AG04449 (cell line): ENCODE measurements at regions of chr12 and their contacts with region 1.

Region 1: DNA sequence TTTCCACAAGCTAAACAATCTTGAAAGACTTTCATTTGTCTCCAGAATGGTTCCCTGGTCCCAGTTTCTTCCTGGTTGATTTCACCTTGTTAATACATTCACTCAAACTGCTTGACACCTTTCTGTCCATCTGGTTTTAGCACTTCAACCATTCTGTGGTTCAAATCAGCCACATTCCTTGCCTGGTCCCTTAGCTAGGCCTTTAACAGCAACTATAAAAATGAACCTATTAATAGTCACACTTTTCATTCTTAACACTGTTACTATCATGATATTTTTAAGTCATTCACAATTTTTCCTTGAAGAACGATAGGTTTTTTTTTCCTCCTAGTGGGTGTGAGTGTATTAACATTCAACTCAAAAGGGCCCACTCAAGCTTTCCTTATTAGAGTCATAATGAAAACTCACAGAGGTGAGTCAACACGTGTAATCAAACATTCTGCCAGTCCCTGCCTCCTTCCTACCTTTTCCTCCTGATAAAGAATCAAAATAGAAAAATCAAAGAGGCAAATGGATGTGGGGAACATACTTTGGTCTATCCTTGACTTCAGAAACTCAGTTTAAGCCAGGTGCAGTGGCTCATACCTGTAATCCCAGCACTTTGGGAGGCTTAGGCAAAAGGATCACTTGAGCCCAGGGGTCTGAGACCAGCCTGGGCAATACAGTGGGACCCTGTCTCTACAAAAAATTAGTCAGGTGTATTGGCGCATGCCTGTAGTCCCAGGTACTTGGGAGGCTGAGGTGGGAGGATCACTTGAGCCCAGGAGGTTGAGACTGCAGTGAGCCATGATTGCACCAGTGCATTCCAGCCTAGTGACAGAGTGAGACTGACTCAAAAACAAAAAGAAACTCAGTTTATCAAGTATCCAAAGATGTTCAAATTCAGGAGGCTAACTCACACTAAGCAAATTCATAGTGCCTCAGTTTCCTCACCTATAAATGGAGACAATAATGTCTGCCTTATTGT is 34.5 kb upstream of the CCNT1 start:
- DNase-seq: no peak
- H3K4me3 ChIP-seq: no peak overlapping the region
- CTCF ChIP-seq: no peak

Region 2: GRCh38 chr12:48774516-48774915 is 23.5 kb after region 1 on chr12:
- CTCF ChIA-PET with region 1: interaction called, 33 read pairs
- POLR2A ChIA-PET with region 1: no interaction called
- DNase-seq: no peak
- H3K4me3 ChIP-seq: no peak overlapping the region
- CTCF ChIP-seq: no peak

Region 3: DNA sequence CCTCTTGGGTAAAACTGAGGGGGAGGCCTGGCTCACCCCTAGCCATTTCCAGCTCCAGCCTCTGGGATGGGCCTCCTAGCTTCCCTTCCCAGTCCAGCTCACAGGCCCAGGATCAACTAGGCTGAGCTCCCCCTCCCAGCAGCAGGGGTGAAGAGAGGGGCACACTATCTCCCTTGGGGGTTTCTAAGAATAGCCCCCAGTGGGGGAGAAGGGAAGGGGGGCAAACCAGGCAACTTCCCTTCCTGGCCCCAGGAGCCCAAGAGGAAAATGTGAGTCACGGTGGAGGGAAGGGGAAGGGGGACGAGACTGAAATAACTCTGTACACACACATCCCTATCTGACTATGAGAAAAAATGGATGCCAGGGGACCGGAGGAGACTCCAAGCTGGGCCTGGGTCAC is 28.8 kb after region 1 on chr12:
- CTCF ChIA-PET with region 1: interaction called, 33 read pairs
- POLR2A ChIA-PET with region 1: no interaction called
- DNase-seq: peak; percentile 45
- H3K4me3 ChIP-seq: no peak overlapping the region; the same call in 1 of the 2 replicates
- CTCF ChIP-seq: no peak

Region 4: DNA sequence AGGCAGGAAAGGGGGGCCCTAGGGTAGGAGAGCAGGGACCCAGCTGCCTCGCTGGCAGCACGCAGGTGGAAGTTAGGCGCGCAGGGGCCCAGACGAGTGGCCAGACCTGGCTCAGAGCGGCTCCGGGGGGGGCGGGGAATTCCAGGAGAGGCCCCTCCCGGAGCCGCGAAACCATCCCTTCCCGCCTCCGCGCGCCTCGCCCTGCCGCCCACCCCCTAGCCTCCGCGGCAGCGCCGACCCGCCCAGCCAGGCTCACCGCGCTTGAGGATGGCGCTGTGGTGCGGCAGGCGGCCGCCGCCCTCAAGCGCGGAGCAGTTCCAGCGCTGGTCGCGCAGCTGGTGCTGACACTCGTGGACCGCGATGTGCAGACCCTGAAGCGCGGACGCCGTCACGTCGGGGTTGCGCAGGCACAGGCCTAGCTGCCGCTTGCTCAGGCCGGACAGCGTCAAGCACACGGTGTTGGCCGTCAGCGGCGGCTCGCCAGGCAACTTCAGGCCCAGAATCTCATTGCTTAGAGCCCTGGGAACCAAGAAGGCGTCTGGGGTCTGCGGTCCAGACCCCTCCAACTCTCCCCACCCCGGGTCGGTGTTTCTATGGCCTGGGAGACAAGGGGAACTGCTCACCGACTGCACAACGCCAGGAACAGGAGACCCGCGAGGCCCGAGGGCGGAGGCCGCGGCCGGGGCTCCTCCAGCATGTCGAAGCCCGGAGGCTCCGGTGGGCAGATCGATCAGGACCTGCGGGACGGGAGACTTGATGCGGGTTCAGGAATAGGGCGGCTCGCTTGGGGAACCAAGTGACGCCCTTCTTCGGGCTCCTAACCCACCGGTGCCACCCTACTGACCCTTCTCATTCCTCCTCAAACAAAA is 219.0 kb after region 1 on chr12:
- CTCF ChIA-PET with region 1: no interaction called
- POLR2A ChIA-PET with region 1: no interaction called
- DNase-seq: no peak
- H3K4me3 ChIP-seq: no peak overlapping the region; the same call in 1 of the 2 replicates
- CTCF ChIP-seq: peak; percentile 19